Dorsolateral prefrontal cortex (tissue), 120 donors: ENCODE measurements at regions of chr10 and their contacts with region 1.

Region 1: GRCh38 chr10:23158370-23158769 is 33.7 kb upstream of the PTF1A start:
- DNase-seq: peak in 6 of 10 donors; percentile 27 to 72 (median 55)
- H3K4me3 ChIP-seq: peak overlapping the region; percentile 7 to 72 (median 48)
- H3K27ac ChIP-seq: no peak overlapping the region
- H3K27me3 ChIP-seq: no peaks in the 10 kb centered on the region
- CTCF ChIP-seq: peak; percentile 62 to 97 (median 87)

Region 2: GRCh38 chr10:23293145-23293724 is 134.9 kb after region 1 on chr10:
- intact Hi-C with region 1: loop called (anchors 2 to 5 kb)
- DNase-seq: peak in 2 of 10 donors; percentile 40 to 53
- H3K4me3 ChIP-seq: peak overlapping the region in 5 of 59 donors; percentile 0 to 28 (median 1)
- H3K27ac ChIP-seq: peak overlapping the region in 1 of 59 donors; percentile 27
- H3K27me3 ChIP-seq: no peaks in the 10 kb centered on the region
- CTCF ChIP-seq: peak in 53 of 56 donors; percentile 20 to 78 (median 59)

Region 3: DNA sequence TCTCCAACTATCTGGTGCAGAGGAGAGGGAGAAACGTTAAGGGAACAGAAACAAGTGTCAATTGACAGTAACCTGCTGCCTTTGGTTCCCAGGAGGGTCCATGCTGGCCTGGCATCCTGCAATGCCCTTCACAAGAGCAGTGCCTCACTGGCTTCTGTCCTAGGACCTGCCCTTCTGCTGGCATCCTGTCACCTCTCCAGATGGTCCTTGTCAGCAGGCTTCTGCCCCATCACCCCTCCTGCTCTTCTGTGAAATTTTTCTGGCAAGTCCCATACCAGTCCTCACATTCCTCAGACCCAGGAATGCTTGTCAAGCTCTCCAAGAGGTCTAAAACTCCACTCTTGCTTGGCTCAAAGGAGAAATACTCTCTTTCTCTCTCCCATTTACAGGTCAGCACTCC is 152.0 kb after region 1 on chr10:
- intact Hi-C with region 1: no loop called
- DNase-seq: peak in 1 of 10 donors; percentile 10
- H3K4me3 ChIP-seq: no peak overlapping the region
- H3K27ac ChIP-seq: no peak overlapping the region
- H3K27me3 ChIP-seq: peaks cover 0 to 6% (median 0%) of the 10 kb centered on the region in 45 donors
- CTCF ChIP-seq: no peak

Region 4: DNA sequence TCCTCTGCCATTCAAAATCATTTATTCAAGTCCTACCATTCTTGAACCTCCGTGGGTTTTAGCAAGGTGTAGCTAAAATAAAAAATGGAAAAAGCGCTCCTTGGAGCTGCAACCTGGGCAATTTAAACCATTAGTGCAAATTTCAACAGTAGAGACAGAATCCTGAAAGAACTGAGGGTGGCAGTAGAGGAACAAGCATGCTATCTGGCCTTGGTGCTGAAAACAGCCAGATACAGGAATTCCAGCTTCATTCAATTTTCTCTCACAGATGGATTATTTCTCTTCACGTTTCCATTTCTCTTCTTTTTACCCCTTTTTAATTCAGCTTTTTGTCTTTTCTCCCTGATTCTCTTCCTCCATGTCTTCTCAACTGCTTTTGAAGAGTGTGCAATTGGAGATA is 358.2 kb after region 1 on chr10:
- intact Hi-C with region 1: loop called in 1 of 2 experiments (anchors 5 kb)
- DNase-seq: no peak
- H3K4me3 ChIP-seq: no peak overlapping the region
- H3K27ac ChIP-seq: no peak overlapping the region
- H3K27me3 ChIP-seq: peaks cover 0 to 5% (median 0%) of the 10 kb centered on the region in 45 donors
- CTCF ChIP-seq: peak in 55 of 56 donors; percentile 16 to 76 (median 55)